CD4-positive, alpha-beta T cell (primary cell): ENCODE measurements at regions of chr13 and their contacts with region 1.

Region 1: DNA sequence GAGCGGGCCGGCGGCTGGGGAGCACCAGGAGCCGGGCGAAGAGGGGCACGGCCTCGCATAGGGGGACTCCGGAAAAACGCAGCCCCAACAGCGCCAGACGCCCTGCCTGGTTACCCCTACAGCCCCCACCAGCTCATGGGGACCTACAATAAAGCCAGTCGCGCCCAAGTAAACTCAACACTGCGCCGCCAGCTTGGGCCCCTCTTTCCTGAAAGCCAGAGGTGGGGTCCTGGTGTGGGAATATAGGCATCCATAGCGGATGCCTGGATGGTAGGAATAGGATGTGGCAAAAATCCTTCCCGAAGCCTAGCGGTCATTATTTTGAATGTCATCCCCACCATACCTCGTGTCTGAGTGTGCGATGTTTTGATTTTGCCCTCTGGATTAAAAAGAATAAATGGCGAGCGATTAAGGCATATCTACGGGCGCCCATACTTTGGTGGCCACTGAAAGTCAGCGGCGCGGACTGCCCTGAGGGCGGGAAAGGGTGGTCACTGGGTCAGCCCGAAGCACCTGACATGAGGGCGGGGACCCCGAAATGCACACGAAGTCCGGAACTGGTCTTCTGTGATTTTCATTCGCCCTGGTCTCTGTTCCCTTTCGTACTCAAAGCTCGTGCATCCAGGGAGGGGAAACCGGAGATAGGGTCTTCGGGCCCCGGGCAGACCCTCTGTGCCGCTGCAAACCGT is at the starts of genes NHLRC3 and PROSER1:
- DNase-seq: peak; percentile 65 to 90 (median 76)
- ATAC-seq: peak; percentile 76
- H3K4me3 ChIP-seq: peak within 1 kb of the TSS; percentile 80
- H3K4me3 Mint-ChIP-seq: peak within 1 kb of the TSS; percentile 95
- H3K27ac ChIP-seq: peak within 1 kb of the TSS; percentile 64 to 76
- H3K27ac Mint-ChIP-seq: peak within 1 kb of the TSS; percentile 98
- H3K4me1 ChIP-seq: peaks cover 12% of the 10 kb centered on the region
- H3K4me1 Mint-ChIP-seq: peaks cover 89% of the 10 kb centered on the region
- H3K27me3 ChIP-seq: no peaks in the 10 kb centered on the region
- H3K27me3 Mint-ChIP-seq: no peaks in the 10 kb centered on the region
- CTCF ChIP-seq: no peak
- total RNA-seq, gene NHLRC3: 3.9 to 5.9 TPM
- total RNA-seq, gene PROSER1: 29.3 to 35.3 TPM

Region 2: GRCh38 chr13:37058910-37059847 is 1978.8 kb before region 1 on chr13 and contains the start of gene SUPT20H:
- CTCF ChIA-PET with region 1: no interaction called
- POLR2A ChIA-PET with region 1: no interaction called
- intact Hi-C with region 1: loop called in 1 of 2 experiments (anchors 10 kb)
- DNase-seq: peak; percentile 89 to 96 (median 94)
- ATAC-seq: peak; percentile 91
- H3K4me3 ChIP-seq: peak within 1 kb of the TSS; percentile 96
- H3K4me3 Mint-ChIP-seq: peak within 1 kb of the TSS; percentile 95
- H3K27ac ChIP-seq: peak within 1 kb of the TSS; percentile 93
- H3K27ac Mint-ChIP-seq: peak within 1 kb of the TSS; percentile 99
- H3K4me1 ChIP-seq: peaks cover 16% of the 10 kb centered on the region
- H3K4me1 Mint-ChIP-seq: peaks cover 43% of the 10 kb centered on the region
- H3K27me3 ChIP-seq: no peaks in the 10 kb centered on the region
- H3K27me3 Mint-ChIP-seq: no peaks in the 10 kb centered on the region
- CTCF ChIP-seq: no peak
- total RNA-seq, gene SUPT20H: 61.7 to 63.1 TPM

Region 3: GRCh38 chr13:38430796-38431195 is 607.2 kb before region 1 on chr13:
- CTCF ChIA-PET with region 1: no interaction called
- POLR2A ChIA-PET with region 1: no interaction called
- intact Hi-C with region 1: no loop called
- DNase-seq: no peak
- ATAC-seq: no peak
- H3K4me3 ChIP-seq: no peak overlapping the region
- H3K4me3 Mint-ChIP-seq: no peak overlapping the region
- H3K27ac ChIP-seq: no peak overlapping the region
- H3K27ac Mint-ChIP-seq: no peak overlapping the region
- H3K4me1 ChIP-seq: no peaks in the 10 kb centered on the region
- H3K4me1 Mint-ChIP-seq: no peaks in the 10 kb centered on the region
- H3K27me3 ChIP-seq: no peaks in the 10 kb centered on the region
- H3K27me3 Mint-ChIP-seq: peaks cover 4% of the 10 kb centered on the region
- CTCF ChIP-seq: no peak

Region 4: DNA sequence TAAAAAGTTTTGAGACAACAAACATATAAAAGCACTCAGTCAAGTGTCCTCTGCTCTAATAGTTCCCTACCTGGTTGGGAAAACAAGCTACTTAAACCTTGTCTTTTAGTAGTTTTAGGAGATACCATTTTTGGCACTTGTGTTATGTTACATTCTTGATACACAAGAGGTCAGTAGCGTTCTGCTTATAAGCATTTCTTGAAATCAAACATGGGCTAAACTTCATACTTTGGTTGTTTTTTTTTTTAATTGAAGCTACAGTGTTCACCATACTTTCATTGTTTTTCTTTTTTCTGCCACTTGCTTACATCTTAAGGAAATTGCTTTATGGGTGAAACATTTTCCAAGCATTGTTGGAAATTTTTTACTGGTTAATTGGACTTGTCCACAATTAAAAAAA is 13.1 kb after region 1 on chr13:
- CTCF ChIA-PET with region 1: no interaction called
- POLR2A ChIA-PET with region 1: interaction called, 11 read pairs
- intact Hi-C with region 1: loop called in 1 of 2 experiments (anchors 1 kb)
- DNase-seq: peak in 3 of 14 experiments; percentile 40 to 53 (median 52)
- ATAC-seq: peak; percentile 48
- H3K4me3 ChIP-seq: no peak overlapping the region
- H3K4me3 Mint-ChIP-seq: no peak overlapping the region
- H3K27ac ChIP-seq: no peak overlapping the region
- H3K27ac Mint-ChIP-seq: no peak overlapping the region
- H3K4me1 ChIP-seq: no peaks in the 10 kb centered on the region
- H3K4me1 Mint-ChIP-seq: no peaks in the 10 kb centered on the region
- H3K27me3 ChIP-seq: no peaks in the 10 kb centered on the region
- H3K27me3 Mint-ChIP-seq: no peaks in the 10 kb centered on the region
- CTCF ChIP-seq: peak; percentile 50

Region 5: DNA sequence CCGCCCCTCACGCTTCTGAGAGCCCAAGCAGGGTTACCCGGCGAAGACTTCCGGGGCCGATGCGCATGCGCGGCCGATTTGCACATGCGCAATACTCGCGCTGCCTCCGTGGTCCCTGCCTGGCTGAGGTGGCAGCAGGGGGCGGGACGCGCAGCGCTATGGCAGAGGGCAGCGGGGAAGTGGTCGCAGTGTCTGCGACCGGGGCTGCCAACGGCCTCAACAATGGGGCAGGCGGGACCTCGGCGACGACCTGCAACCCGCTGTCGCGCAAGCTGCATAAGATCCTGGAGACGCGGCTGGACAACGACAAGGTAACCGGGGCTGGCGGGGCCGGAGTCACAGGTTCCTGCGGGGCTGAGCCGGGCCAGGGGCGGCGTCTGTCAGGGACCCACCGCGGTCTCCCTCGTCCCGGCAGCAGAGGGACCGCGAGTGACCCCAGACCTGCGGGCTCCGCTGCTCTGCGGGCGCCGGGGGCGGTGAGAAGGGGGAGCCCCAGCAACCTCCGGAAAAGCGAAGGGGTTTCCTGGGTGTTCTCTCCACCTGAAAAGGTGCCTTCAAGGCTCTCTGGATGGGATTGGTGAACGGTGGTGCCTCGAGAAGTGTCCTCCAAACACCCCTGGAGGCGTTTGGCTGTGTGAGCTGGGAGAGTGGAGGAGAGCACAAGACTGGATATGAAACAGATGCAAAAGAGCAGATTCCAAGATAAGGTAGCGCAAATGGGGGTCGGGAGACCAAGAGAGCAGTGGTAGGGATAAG is 617.7 kb after region 1 on chr13 and contains the start of gene COG6:
- CTCF ChIA-PET with region 1: no interaction called
- POLR2A ChIA-PET with region 1: no interaction called
- intact Hi-C with region 1: loop called in 1 of 2 experiments (anchors 5 kb)
- DNase-seq: peak; percentile 86 to 98 (median 94)
- ATAC-seq: peak; percentile 90
- H3K4me3 ChIP-seq: peak within 1 kb of the TSS; percentile 90
- H3K4me3 Mint-ChIP-seq: peak within 1 kb of the TSS; percentile 99
- H3K27ac ChIP-seq: peak within 1 kb of the TSS; percentile 30 to 48
- H3K27ac Mint-ChIP-seq: peak within 1 kb of the TSS; percentile 89
- H3K4me1 ChIP-seq: peaks cover 8% of the 10 kb centered on the region
- H3K4me1 Mint-ChIP-seq: peaks cover 39% of the 10 kb centered on the region
- H3K27me3 ChIP-seq: no peaks in the 10 kb centered on the region
- H3K27me3 Mint-ChIP-seq: no peaks in the 10 kb centered on the region
- CTCF ChIP-seq: peak; percentile 15
- total RNA-seq, gene COG6: 13.8 to 16.0 TPM

Region 6: GRCh38 chr13:40181203-40181845 is 1143.3 kb after region 1 on chr13:
- CTCF ChIA-PET with region 1: no interaction called
- POLR2A ChIA-PET with region 1: no interaction called
- intact Hi-C with region 1: no loop called
- DNase-seq: no peak
- ATAC-seq: no peak
- H3K4me3 ChIP-seq: no peak overlapping the region
- H3K4me3 Mint-ChIP-seq: no peak overlapping the region
- H3K27ac ChIP-seq: no peak overlapping the region
- H3K27ac Mint-ChIP-seq: no peak overlapping the region
- H3K4me1 ChIP-seq: peaks cover 28% of the 10 kb centered on the region
- H3K4me1 Mint-ChIP-seq: peaks cover 74% of the 10 kb centered on the region
- H3K27me3 ChIP-seq: no peaks in the 10 kb centered on the region
- H3K27me3 Mint-ChIP-seq: no peaks in the 10 kb centered on the region
- CTCF ChIP-seq: no peak